K562 (cell line): ENCODE measurements at regions of chr2 and their contacts with region 1.

Region 1: DNA sequence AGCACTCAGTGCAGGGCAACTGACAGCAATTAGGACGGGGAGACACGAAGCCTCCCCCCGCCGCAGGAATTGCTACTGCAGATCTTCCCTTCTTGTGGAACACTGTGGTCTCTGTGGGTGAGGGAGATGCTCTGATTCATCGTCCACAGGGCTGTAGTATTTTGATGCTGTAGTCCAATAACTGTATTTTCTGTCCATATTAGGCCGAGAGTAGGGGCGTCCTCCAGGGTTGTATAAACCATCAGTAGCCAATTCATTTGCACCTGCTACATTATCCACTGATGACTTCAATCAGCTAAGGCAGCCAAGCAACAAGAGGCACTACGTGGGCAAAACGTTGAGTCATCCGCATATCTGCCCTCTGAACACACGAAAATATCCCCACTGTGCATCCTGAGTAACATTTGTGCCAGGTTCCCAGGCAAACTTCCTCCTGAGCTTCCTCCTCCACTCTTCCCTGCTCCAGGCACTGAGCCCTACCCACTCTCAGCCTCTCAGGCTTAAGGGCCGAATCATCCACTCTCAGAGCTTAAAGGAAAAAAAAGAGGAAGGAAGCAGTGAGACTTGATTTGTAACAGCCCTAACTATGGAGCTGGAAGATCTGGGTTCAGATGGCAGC is 62.1 kb downstream of the LBH start:
- DNase-seq: no peak
- ATAC-seq: 0 out of 3 replicates have a peak, but pooled peaks have one; percentile 15
- H3K4me3 ChIP-seq: no peak overlapping the region
- H3K27ac ChIP-seq: no peak overlapping the region
- H3K4me1 ChIP-seq: peaks cover 13 to 18% of the 10 kb centered on the region in 2 experiments; a peak in 4 of 5 replicates
- H3K27me3 ChIP-seq: no peaks in the 10 kb centered on the region
- CTCF ChIP-seq: no peak
- EP300 ChIP-seq: no peak
- POLR2A ChIP-seq: no peak
- RAD21 ChIP-seq: no peak

Region 2: DNA sequence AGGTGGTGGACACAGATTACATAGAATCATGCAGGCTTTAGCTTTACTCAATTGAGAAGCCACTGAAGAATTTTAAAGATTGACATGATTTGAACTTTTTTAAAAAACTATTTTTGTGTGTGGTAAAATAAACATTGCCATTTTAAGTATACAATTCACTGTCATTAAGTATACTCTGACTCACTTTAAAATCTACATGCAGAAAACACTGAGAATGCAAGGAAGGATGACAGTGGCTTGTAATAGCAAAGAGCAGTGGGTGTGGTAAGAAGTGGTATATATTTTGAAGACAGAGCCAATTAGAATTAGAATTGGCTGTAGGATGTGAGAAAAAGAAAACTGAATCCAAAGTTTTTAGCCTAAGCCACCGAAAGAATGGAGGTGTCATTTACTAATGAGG is 1438.2 kb before region 1 on chr2:
- CTCF ChIA-PET with region 1: no interaction called
- POLR2A ChIA-PET with region 1: no interaction called
- in situ Hi-C with region 1: no loop called
- intact Hi-C with region 1: no loop called
- DNase-seq: no peak
- ATAC-seq: no peak
- H3K4me3 ChIP-seq: no peak overlapping the region
- H3K27ac ChIP-seq: no peak overlapping the region
- H3K4me1 ChIP-seq: no peaks in the 10 kb centered on the region
- H3K27me3 ChIP-seq: no peaks in the 10 kb centered on the region
- CTCF ChIP-seq: no peak
- EP300 ChIP-seq: no peak
- POLR2A ChIP-seq: no peak
- RAD21 ChIP-seq: no peak

Region 3: GRCh38 chr2:30146438-30147147 is 146.8 kb before region 1 on chr2 and contains the start of gene YPEL5:
- CTCF ChIA-PET with region 1: no interaction called
- POLR2A ChIA-PET with region 1: no interaction called
- in situ Hi-C with region 1: no loop called
- intact Hi-C with region 1: loop called (anchors 5 kb)
- DNase-seq: peak; percentile 96 to 98 (median 96)
- ATAC-seq: peak; percentile 97
- H3K4me3 ChIP-seq: peak within 1 kb of the TSS; percentile 86
- H3K27ac ChIP-seq: peak within 1 kb of the TSS; percentile 91
- H3K4me1 ChIP-seq: peaks cover 5 to 34% of the 10 kb centered on the region in 2 experiments
- H3K27me3 ChIP-seq: 0 out of 5 replicates have a peak, but pooled peaks cover 0 to 2% of the 10 kb centered on the region in 2 experiments
- CTCF ChIP-seq: no peak
- EP300 ChIP-seq: no peak
- POLR2A ChIP-seq: peak; percentile 74
- RAD21 ChIP-seq: no peak
- polyA plus RNA-seq, gene YPEL5: 19.0 to 23.8 TPM

Region 4: DNA sequence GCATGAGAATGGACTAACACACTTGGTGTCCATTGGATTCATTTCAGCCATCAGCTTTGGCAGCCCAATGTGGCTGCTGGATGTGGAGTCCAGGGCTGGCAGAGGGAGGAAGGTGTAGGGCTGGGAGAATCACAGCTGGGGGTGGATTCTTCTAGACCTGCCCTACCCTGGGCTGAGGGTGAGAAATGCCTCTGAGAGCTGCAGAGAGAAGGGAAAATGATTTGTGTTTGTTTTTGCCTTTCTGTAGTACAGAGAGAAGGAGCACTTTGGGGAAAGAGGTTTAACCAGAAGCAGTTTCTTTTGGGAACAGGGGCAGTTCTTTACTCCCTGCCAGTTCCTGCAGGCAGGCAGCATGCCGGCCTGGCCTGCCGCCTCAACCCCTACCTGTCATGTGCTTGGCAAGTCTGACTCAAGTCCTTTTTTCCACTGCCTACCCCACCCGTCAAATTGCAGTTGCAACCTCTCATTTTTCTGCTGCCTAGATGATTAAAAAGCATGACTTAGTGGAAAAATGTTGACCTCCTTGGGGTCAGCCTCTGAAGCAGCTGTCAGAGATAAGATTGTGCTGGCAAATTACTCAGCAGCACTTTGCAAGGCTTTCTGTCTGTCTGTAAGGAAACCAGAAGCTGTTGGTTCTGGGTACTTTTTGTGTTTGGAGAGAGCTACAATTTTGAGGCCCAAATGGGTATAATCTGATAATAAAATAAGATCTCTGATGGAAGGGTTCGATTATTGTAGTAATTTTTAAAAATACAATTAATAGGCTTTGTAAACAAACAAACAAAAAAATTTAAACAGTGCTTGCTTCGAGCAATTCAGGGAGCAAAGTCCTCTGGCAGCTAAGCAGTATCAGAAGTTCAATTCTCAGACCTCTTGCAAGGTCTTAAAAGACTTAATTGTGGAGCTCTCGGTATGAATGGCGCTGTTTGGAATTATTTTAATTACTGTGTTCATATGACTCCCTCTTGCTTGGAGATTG is 40.4 kb before region 1 on chr2:
- CTCF ChIA-PET with region 1: no interaction called
- POLR2A ChIA-PET with region 1: interaction called, 5 read pairs
- in situ Hi-C with region 1: no loop called
- intact Hi-C with region 1: loop called (anchors 1 kb)
- DNase-seq: peak; percentile 82 to 95 (median 86)
- ATAC-seq: peak; percentile 84
- H3K4me3 ChIP-seq: no peak overlapping the region
- H3K27ac ChIP-seq: peak overlapping the region; percentile 94
- H3K4me1 ChIP-seq: peaks cover 48 to 49% of the 10 kb centered on the region in 2 experiments
- H3K27me3 ChIP-seq: no peaks in the 10 kb centered on the region
- CTCF ChIP-seq: no peak
- EP300 ChIP-seq: peak; percentile 99
- POLR2A ChIP-seq: peak; percentile 50; the same call in 1 of the 2 replicates
- RAD21 ChIP-seq: peak; percentile 26 to 42

Region 5: DNA sequence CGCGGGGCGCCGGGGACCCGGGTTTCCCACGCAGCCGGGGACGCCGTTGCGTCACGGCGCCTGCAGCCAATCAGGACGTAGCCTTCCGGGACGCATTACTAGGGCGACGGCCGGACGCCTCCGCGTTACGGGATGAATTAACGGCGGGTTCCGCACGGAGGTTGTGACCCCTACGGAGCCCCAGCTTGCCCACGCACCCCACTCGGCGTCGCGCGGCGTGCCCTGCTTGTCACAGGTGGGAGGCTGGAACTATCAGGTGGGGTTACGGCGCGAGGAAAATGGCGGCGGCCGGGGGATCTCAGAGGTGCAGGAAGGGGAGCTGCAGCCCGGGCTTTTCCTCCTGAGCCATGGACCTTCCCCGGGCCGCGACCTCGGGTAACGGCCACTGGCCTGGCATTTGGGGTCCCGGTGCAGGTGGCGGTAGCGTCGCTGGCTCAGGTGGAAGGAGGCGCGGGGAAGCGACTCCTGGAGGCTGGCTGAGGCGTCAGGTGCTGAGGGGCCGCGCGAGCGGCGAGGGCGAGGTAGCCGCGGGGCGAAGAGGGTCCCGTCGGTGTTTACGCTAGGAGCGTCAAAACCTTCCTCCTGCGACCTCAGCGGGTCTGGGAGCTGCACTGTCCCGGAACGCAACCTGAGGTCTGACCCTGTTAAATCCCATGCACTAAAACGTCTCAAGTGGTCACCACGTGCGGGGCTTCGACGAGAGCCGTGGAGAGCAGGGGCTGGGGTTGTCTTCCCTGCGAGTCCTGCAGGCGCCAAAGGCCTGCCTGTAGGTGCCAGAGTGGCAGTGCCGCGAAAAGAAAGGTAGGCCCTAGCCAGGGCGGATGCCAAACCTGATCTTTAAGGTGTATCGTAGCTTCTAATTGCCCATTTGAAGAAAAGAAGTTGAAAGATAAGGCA is 154.0 kb after region 1 on chr2 and contains the start of gene LCLAT1:
- CTCF ChIA-PET with region 1: no interaction called
- POLR2A ChIA-PET with region 1: no interaction called
- in situ Hi-C with region 1: no loop called
- intact Hi-C with region 1: loop called (anchors 5 kb)
- DNase-seq: peak; percentile 92 to 95 (median 94)
- ATAC-seq: peak; percentile 96
- H3K4me3 ChIP-seq: peak within 1 kb of the TSS; percentile 57
- H3K27ac ChIP-seq: peak within 1 kb of the TSS; percentile 79
- H3K4me1 ChIP-seq: peaks cover 19 to 25% of the 10 kb centered on the region in 2 experiments
- H3K27me3 ChIP-seq: no peaks in the 10 kb centered on the region
- CTCF ChIP-seq: 0 out of 6 replicates have a peak, but pooled peaks of 1 of the 3 experiments have one; percentile 16
- EP300 ChIP-seq: no peak
- POLR2A ChIP-seq: peak; percentile 79
- RAD21 ChIP-seq: no peak
- polyA plus RNA-seq, gene LCLAT1: 29.4 to 63.3 TPM